IMR-90 (cell line): ENCODE measurements at regions of chr18 and their contacts with region 1.

Region 1: DNA sequence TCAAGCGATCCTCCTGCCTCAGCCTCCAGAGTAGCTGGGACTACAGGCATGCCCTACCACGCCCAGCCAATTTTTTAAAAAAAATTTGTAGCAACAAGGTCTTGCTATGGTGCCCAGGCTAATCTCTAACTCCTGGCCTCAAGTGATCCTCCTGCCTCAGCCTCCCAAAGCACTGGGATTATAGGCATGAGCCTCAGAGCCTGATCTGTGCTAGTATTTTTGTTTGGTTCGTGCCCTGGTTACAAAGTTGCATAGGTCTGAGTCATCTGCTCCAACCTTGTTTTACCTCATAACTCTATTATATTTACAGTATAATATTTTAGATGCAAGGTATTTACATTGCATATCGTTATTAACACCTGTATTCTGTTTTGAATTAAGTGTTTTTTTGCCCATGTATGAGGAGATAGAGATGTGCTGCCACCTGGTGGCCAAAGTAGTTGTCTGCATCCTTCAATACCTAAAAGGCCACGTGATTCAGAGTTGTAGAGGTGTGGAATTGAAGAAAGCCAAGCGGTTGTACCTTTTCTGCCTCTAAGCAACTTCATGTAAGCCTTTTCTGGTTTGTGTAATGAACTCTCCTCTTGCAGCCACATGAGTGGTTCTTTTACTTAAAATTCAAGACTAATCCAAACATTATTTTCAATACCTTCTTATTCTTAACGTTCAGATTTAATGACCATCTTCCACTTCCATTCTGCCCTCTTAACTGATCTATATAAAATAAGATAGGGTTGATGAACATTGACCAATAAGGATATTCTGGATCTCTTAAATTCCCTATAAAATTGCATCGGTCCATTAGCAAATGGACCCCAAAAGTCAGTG is 19.9 kb upstream of the CABYR start:
- DNase-seq: peak; percentile 73
- ATAC-seq: peak; percentile 77
- H3K4me3 ChIP-seq: no peak overlapping the region
- H3K27ac ChIP-seq: no peak overlapping the region
- H3K4me1 ChIP-seq: peaks cover 5% of the 10 kb centered on the region
- H3K27me3 ChIP-seq: no peaks in the 10 kb centered on the region
- CTCF ChIP-seq: peak; percentile 75
- POLR2A ChIP-seq: no peak
- RAD21 ChIP-seq: peak; percentile 86

Region 2: DNA sequence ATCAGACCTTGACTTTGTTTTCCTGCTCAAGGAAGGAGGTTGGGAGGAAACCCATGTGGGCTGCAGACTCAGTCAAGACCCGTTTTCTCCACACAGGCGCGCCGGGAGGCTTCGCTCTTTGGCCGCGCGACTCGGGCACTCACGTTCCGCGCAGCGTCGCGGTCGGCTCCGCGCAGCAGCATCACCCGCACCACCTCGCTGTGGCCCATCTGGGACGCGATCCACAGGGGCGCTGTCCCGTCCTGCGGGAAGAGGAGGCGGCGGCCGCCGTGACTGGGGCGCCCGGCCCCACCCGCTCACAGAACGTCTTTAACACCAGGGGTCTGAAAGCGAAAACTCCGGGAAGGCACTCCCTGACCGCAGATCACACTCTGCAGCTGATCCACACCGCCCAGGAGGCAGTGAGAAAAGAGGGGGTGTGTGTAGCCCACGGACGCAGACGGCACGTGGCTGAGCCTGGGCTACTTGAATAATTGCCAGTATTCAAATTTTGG is 499.5 kb before region 1 on chr18:
- CTCF ChIA-PET with region 1: no interaction called
- POLR2A ChIA-PET with region 1: no interaction called
- dilution Hi-C with region 1: no loop called
- in situ Hi-C with region 1: loop called (anchors 10 kb)
- intact Hi-C with region 1: loop called (anchors 1 kb)
- DNase-seq: no peak
- ATAC-seq: peak; percentile 80
- H3K4me3 ChIP-seq: peak overlapping the region; percentile 48
- H3K27ac ChIP-seq: no peak overlapping the region; the same call in 1 of the 2 replicates
- H3K4me1 ChIP-seq: peaks cover 6% of the 10 kb centered on the region
- H3K27me3 ChIP-seq: peaks cover 23% of the 10 kb centered on the region
- CTCF ChIP-seq: no peak
- POLR2A ChIP-seq: no peak
- RAD21 ChIP-seq: no peak

Region 3: GRCh38 chr18:23629444-23629946 is 489.5 kb before region 1 on chr18:
- CTCF ChIA-PET with region 1: no interaction called
- POLR2A ChIA-PET with region 1: no interaction called
- dilution Hi-C with region 1: no loop called
- in situ Hi-C with region 1: loop called (anchors 10 kb)
- intact Hi-C with region 1: no loop called
- DNase-seq: no peak
- ATAC-seq: no peak
- H3K4me3 ChIP-seq: no peak overlapping the region
- H3K27ac ChIP-seq: no peak overlapping the region
- H3K4me1 ChIP-seq: peaks cover 8% of the 10 kb centered on the region
- H3K27me3 ChIP-seq: peaks cover 2% of the 10 kb centered on the region; the same call in 1 of the 2 replicates
- CTCF ChIP-seq: no peak
- POLR2A ChIP-seq: no peak
- RAD21 ChIP-seq: no peak

Region 4: DNA sequence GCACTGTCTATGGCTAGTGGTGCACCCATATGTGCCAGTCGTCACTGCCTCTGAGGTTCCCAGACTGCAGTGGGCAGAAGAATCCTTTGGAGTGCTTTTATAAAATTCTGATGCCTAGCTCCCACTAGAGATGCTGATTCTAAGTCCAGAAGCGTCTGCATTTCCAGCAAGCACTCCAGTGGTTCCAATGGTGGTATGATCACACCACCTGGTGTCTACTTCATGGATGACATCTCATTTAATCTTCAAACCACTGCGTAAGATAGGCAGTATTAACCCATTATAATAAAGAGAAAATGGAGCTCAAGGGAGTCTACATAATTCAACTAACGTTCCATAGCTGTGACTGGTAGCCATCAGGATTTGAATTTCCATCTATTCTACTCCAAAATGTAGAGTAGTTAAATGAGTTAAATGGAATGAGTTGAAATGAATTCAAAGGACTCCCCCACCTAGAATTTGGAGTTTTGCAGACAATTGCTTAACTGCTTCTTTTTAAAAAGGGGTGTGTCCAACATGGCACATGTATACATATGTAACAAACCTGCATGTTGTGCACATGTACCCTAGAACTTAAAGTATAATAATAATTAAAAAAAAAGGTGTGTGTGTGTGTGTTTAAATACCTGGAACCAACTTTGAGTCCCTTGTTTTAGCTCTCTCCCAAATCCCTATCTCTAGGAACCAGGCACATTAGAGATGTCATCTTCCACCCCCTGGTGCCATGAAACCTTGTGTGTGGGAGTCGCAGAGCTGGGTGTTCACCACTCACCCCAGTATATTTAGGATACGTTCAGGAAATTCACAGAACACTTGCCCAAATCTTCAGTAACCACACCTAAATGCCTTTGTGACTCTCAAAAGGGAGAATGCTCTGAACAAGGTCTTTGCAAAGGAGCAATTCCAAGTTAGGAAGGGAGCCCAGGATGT is 415.6 kb before region 1 on chr18:
- CTCF ChIA-PET with region 1: no interaction called
- POLR2A ChIA-PET with region 1: no interaction called
- dilution Hi-C with region 1: no loop called
- in situ Hi-C with region 1: no loop called
- intact Hi-C with region 1: loop called (anchors 5 kb)
- DNase-seq: peak; percentile 79
- ATAC-seq: peak; percentile 97
- H3K4me3 ChIP-seq: no peak overlapping the region
- H3K27ac ChIP-seq: no peak overlapping the region
- H3K4me1 ChIP-seq: no peaks in the 10 kb centered on the region
- H3K27me3 ChIP-seq: peaks cover 22% of the 10 kb centered on the region
- CTCF ChIP-seq: peak; percentile 83
- POLR2A ChIP-seq: 0 out of 2 replicates have a peak, but pooled peaks have one; percentile 28
- RAD21 ChIP-seq: peak; percentile 94

Region 5: GRCh38 chr18:23812546-23813440 is 306.2 kb before region 1 on chr18:
- CTCF ChIA-PET with region 1: no interaction called
- POLR2A ChIA-PET with region 1: no interaction called
- dilution Hi-C with region 1: no loop called
- in situ Hi-C with region 1: no loop called
- intact Hi-C with region 1: loop called (anchors 5 kb)
- DNase-seq: peak; percentile 19
- ATAC-seq: peak; percentile 61; the same call in 1 of the 2 replicates
- H3K4me3 ChIP-seq: no peak overlapping the region
- H3K27ac ChIP-seq: no peak overlapping the region
- H3K4me1 ChIP-seq: no peaks in the 10 kb centered on the region
- H3K27me3 ChIP-seq: peaks cover 30% of the 10 kb centered on the region
- CTCF ChIP-seq: peak; percentile 66
- POLR2A ChIP-seq: no peak
- RAD21 ChIP-seq: peak; percentile 67

Region 6: DNA sequence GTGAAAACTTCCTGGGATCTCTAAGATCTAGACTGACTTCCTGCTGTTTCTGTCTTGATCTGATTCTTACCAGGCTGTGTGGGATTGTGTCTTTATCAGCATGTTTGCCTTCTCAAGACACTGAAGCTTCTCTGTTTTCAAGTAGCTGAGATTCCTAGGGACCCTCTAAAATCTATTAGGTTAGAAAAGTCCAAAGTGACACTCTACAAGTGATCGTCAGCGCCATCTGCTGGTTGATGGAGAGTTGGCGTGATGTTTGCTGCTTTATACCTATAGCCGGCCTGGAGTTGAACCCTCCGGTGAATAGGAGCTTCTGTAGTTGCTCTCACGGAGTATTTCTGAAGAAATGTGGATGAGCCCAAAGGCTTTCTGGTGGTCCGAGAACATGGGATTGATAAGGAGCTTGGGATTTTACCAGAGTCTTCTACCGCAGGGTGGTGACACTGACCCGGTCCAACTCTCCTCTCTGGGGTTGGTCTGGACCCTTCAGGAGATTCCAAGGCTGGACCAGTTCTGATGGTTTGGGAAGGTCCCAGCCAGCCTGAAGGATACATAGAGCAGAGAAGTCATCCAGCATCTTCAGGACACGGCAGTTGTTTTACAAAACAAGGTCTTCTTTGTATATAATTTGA is 200.4 kb before region 1 on chr18:
- CTCF ChIA-PET with region 1: interaction called, 4 read pairs
- POLR2A ChIA-PET with region 1: no interaction called
- dilution Hi-C with region 1: no loop called
- in situ Hi-C with region 1: no loop called
- intact Hi-C with region 1: loop called (anchors 1 kb)
- DNase-seq: peak; percentile 56
- ATAC-seq: peak; percentile 82
- H3K4me3 ChIP-seq: no peak overlapping the region
- H3K27ac ChIP-seq: no peak overlapping the region
- H3K4me1 ChIP-seq: no peaks in the 10 kb centered on the region
- H3K27me3 ChIP-seq: 0 out of 2 replicates have a peak, but pooled peaks cover 2% of the 10 kb centered on the region
- CTCF ChIP-seq: peak; percentile 72
- POLR2A ChIP-seq: no peak
- RAD21 ChIP-seq: peak; percentile 64

Region 7: DNA sequence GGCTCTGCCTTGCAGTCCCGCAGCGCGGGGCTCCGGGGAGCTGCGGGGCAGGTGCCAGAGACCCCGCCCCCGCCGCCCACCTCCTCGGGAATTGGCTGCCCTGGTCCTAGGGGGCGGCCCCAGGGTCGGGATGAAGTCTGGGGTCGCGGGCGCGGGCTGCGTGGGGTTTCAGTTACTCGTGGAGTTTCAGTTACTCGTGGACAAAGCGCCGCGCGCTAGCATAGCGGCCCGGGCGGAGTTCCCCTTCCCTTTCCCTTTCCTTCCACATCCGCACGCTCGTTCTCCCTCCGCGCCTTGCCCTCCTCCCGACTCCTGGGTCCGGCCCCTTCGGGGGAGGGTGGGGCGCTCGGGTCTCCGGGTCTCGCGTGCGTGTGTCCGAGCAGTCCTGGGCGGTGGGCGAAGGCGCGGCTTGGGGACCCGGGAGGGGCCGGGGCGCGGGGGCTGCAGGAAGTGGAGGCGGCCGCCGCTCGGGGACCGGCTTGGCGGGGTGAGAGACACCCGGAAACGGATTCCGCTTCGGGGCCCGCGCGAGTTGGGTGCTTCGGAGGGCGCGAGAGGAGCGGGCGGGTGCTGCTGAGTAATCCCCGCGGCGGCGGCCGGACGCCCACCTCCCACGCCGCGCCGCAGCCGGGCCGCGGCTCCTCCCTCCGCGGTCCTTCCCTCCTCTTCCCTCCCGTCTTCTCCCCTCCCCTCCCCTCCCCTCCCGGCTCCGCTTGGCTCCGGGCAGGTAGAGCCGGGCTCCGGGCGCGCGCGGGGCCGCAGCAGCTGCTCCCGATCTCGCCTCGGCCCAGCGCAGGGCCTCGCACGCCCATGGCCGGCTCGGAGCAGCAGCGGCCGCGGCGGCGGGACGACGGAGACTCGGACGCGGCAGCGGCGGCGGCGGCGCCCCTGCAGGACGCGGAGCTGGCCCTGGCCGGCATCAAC is 104.6 kb before region 1 on chr18 and contains the start of gene TTC39C:
- CTCF ChIA-PET with region 1: no interaction called
- POLR2A ChIA-PET with region 1: no interaction called
- dilution Hi-C with region 1: no loop called
- in situ Hi-C with region 1: no loop called
- intact Hi-C with region 1: loop called (anchors 1 kb)
- DNase-seq: peak; percentile 71
- ATAC-seq: peak; percentile 85
- H3K4me3 ChIP-seq: peak within 1 kb of the TSS; percentile 82
- H3K27ac ChIP-seq: peak within 1 kb of the TSS; percentile 97
- H3K4me1 ChIP-seq: peaks cover 4% of the 10 kb centered on the region; the same call in 1 of the 2 replicates
- H3K27me3 ChIP-seq: peaks cover 7% of the 10 kb centered on the region
- CTCF ChIP-seq: no peak
- POLR2A ChIP-seq: peak; percentile 57; the same call in 1 of the 2 replicates
- RAD21 ChIP-seq: no peak; the same call in 1 of the 2 replicates
- total RNA-seq, gene TTC39C: 20.8 and 22.8 TPM in 2 replicates